ENCODE measurements at regions of chr12 and their contacts with region 1.

Region 1: DNA sequence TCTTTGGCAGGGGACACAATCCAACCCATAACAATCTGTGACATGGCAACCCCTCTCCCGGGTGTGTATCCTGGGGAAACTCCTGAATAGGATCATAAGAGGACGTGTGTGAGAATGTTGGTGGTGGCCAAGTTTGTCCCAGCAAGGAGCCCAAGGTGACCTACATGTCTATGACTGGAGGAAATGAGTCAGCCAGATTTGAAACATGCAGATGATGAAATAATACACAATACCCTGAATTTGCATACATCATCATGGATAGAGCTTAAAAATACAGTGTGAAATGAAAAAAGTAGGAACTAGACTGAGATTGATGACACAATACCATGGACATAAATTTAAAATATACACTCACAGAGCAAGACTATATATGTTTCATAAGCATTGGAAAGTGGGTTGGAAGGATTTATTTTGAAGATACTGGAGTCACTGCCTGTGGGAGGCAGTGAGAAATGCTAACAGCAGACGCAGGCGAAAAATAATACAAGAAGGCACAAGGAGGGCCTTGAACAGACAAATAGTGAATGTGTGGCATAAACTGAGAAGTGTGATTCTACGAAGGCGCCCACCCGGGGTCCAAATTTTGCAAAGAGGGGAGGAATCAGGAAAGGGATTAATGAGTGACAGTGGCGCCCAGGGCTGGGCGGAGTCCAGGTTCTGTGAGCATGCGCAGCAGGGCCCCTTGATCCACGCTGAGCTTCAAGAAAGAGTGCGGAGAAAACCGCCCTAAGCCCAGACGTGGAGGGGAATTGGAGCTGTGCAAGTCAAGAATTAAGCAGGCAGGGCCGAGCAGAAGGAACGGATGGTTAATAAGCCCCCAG is 7.0 kb upstream of the MAP1LC3B2 start:
- DNase-seq: peak; percentile 97 to 100 (median 98)
- H3K4me3 ChIP-seq: no peak overlapping the region
- H3K4me3 Mint-ChIP-seq: no peak overlapping the region
- H3K27ac ChIP-seq: peak overlapping the region; percentile 97
- H3K27ac Mint-ChIP-seq: no peak overlapping the region
- H3K4me1 ChIP-seq: peaks cover 54 to 56% of the 10 kb centered on the region in 2 donors
- H3K4me1 Mint-ChIP-seq: peaks cover 27% of the 10 kb centered on the region
- H3K27me3 ChIP-seq: no peaks in the 10 kb centered on the region
- H3K27me3 Mint-ChIP-seq: peaks cover 0 to 2% (median 0%) of the 10 kb centered on the region in 3 donors
- CTCF ChIP-seq: no peak

Region 2: DNA sequence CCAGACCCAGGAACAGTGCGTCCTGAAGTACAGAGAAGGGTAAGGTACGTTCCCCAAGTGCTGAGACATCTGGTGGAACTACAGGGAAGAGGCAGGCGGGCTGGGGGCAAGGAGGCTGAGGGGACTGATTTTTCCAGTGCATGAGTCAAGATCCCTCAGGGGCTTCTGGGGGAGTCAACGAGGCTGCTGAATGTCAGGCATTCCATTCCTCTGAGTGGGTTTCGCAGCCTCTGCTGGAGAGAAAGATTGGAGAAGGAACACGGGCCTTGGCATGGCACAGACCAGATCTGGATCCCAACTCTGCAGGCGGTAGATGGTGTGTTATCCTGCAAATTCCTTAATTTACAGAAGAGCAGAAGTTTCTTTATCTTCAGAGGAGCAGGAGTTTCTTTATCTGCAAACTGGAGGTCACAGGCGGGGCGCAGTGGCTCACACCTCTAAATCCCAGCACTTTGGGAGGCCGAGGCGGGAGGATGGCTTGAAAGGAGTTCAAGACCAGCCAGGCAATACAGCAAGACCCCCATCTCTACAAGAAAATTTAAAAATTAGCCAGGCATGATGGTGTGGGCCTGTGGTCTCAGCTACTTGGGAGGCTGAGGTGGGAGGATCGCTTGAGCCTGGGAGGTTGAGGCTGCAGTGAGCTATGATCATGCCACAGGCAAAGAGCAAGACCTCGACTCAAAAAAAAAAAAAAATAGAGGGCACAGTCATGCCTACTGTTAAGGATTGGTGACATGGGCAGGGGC is 125.6 kb before region 1 on chr12:
- intact Hi-C with region 1: no loop called
- DNase-seq: no peak
- H3K4me3 ChIP-seq: no peak overlapping the region
- H3K4me3 Mint-ChIP-seq: no peak overlapping the region
- H3K27ac ChIP-seq: no peak overlapping the region
- H3K27ac Mint-ChIP-seq: no peak overlapping the region
- H3K4me1 ChIP-seq: peaks cover 0 to 3% of the 10 kb centered on the region in 2 donors
- H3K4me1 Mint-ChIP-seq: peaks cover 5% of the 10 kb centered on the region
- H3K27me3 ChIP-seq: no peaks in the 10 kb centered on the region
- H3K27me3 Mint-ChIP-seq: peaks cover 0 to 4% (median 4%) of the 10 kb centered on the region in 3 donors
- CTCF ChIP-seq: no peak

Region 3: GRCh38 chr12:116508145-116509121 is 43.7 kb before region 1 on chr12:
- intact Hi-C with region 1: no loop called
- DNase-seq: peak; percentile 17 to 29 (median 24)
- H3K4me3 ChIP-seq: peak overlapping the region; percentile 29 to 70 (median 34)
- H3K4me3 Mint-ChIP-seq: peak overlapping the region; percentile 80 to 90
- H3K27ac ChIP-seq: no peak overlapping the region
- H3K27ac Mint-ChIP-seq: peak overlapping the region in 3 of 7 donors; percentile 11 to 81 (median 63)
- H3K4me1 ChIP-seq: peaks cover 11 to 13% of the 10 kb centered on the region in 2 donors
- H3K4me1 Mint-ChIP-seq: peaks cover 11% of the 10 kb centered on the region
- H3K27me3 ChIP-seq: peaks cover 0 to 7% of the 10 kb centered on the region in 2 donors
- H3K27me3 Mint-ChIP-seq: peaks cover 7 to 19% (median 10%) of the 10 kb centered on the region in 3 donors
- CTCF ChIP-seq: no peak

Region 4: DNA sequence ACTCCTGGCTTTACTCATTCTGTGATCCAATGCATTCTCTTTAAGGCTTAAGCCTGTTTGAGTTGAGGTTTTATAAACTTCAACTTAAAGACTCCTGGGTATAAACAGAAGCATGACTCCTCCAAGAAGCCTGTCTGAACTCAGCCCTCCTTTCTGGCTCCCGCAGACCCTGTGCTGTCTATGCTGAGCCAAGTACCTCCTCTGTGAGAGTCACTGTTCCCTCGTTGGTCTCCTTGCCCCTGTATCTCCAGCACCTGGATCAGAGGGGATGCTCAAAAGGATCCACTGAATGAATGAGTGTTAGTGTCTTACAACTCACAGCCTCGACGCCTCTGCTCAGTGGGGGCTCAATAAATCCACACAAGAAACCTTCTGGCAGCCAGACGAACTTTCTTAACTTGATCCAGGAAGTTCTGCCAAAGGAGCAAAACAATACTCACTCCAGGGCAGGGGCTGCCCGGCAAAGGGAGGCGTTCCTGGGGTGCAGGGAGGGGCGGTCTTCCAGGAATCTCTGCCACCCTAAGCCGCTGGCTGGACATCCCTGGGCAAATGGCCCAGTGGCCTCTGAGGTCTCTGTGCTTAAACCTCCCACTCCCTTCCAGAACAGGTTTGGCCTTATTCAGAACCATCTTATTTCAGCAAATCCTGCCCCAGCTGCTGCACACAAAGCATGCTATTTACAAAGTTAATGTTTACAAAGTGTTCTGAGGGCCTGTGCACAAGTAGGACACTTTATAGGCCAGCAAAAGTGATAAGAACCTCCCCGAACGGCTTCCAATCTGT is 39.9 kb after region 1 on chr12:
- intact Hi-C with region 1: loop called in 1 of 2 experiments (anchors 2 kb)
- DNase-seq: no peak
- H3K4me3 ChIP-seq: no peak overlapping the region
- H3K4me3 Mint-ChIP-seq: no peak overlapping the region
- H3K27ac ChIP-seq: peak overlapping the region; percentile 89 to 99
- H3K27ac Mint-ChIP-seq: peak overlapping the region; percentile 89 to 100 (median 99)
- H3K4me1 ChIP-seq: peaks cover 45 to 50% of the 10 kb centered on the region in 2 donors
- H3K4me1 Mint-ChIP-seq: peaks cover 44% of the 10 kb centered on the region
- H3K27me3 ChIP-seq: no peaks in the 10 kb centered on the region
- H3K27me3 Mint-ChIP-seq: peaks cover 0 to 1% (median 0%) of the 10 kb centered on the region in 3 donors
- CTCF ChIP-seq: no peak

Region 5: GRCh38 chr12:116629480-116629879 is 77.3 kb after region 1 on chr12:
- intact Hi-C with region 1: no loop called
- DNase-seq: no peak
- H3K4me3 ChIP-seq: no peak overlapping the region
- H3K4me3 Mint-ChIP-seq: no peak overlapping the region
- H3K27ac ChIP-seq: no peak overlapping the region
- H3K27ac Mint-ChIP-seq: no peak overlapping the region
- H3K4me1 ChIP-seq: peaks cover 14 to 20% of the 10 kb centered on the region in 2 donors
- H3K4me1 Mint-ChIP-seq: peaks cover 37% of the 10 kb centered on the region
- H3K27me3 ChIP-seq: no peaks in the 10 kb centered on the region
- H3K27me3 Mint-ChIP-seq: peaks cover 0 to 3% (median 0%) of the 10 kb centered on the region in 3 donors
- CTCF ChIP-seq: no peak

Region 6: GRCh38 chr12:117273091-117273490 is 720.9 kb after region 1 on chr12:
- intact Hi-C with region 1: no loop called
- DNase-seq: no peak
- H3K4me3 ChIP-seq: no peak overlapping the region
- H3K4me3 Mint-ChIP-seq: no peak overlapping the region
- H3K27ac ChIP-seq: no peak overlapping the region
- H3K27ac Mint-ChIP-seq: no peak overlapping the region
- H3K4me1 ChIP-seq: no peaks in the 10 kb centered on the region
- H3K4me1 Mint-ChIP-seq: no peaks in the 10 kb centered on the region
- H3K27me3 ChIP-seq: no peaks in the 10 kb centered on the region
- H3K27me3 Mint-ChIP-seq: peaks cover 7 to 14% (median 13%) of the 10 kb centered on the region in 3 donors
- CTCF ChIP-seq: no peak